IMR-90 (cell line): ENCODE measurements at regions of chr2 and their contacts with region 1.

Region 1: GRCh38 chr2:70070541-70071268 is 16.6 kb upstream of the PCBP1 start:
- DNase-seq: peak; percentile 90
- ATAC-seq: peak; percentile 98
- H3K4me3 ChIP-seq: no peak overlapping the region
- H3K27ac ChIP-seq: peak overlapping the region; percentile 83; the same call in 1 of the 2 replicates
- H3K4me1 ChIP-seq: peaks cover 6% of the 10 kb centered on the region
- H3K27me3 ChIP-seq: no peaks in the 10 kb centered on the region
- CTCF ChIP-seq: peak; percentile 90
- POLR2A ChIP-seq: no peak
- RAD21 ChIP-seq: peak; percentile 91

Region 2: GRCh38 chr2:70124983-70125480 is 54.3 kb after region 1 on chr2:
- CTCF ChIA-PET with region 1: no interaction called
- POLR2A ChIA-PET with region 1: no interaction called
- dilution Hi-C with region 1: no loop called
- in situ Hi-C with region 1: no loop called
- intact Hi-C with region 1: no loop called
- DNase-seq: peak; percentile 31
- ATAC-seq: peak; percentile 34
- H3K4me3 ChIP-seq: peak overlapping the region; percentile 20
- H3K27ac ChIP-seq: peak overlapping the region; percentile 54
- H3K4me1 ChIP-seq: peaks cover 17% of the 10 kb centered on the region
- H3K27me3 ChIP-seq: no peaks in the 10 kb centered on the region
- CTCF ChIP-seq: no peak
- POLR2A ChIP-seq: no peak
- RAD21 ChIP-seq: no peak

Region 3: GRCh38 chr2:70142590-70143313 is 72.0 kb after region 1 on chr2:
- CTCF ChIA-PET with region 1: interaction called, 3 read pairs
- POLR2A ChIA-PET with region 1: interaction called, 3 read pairs
- dilution Hi-C with region 1: no loop called
- in situ Hi-C with region 1: no loop called
- intact Hi-C with region 1: loop called (anchors 1 kb)
- DNase-seq: peak; percentile 99
- ATAC-seq: peak; percentile 88
- H3K4me3 ChIP-seq: peak overlapping the region; percentile 21; the same call in 1 of the 2 replicates
- H3K27ac ChIP-seq: peak overlapping the region; percentile 77
- H3K4me1 ChIP-seq: peaks cover 12% of the 10 kb centered on the region
- H3K27me3 ChIP-seq: no peaks in the 10 kb centered on the region
- CTCF ChIP-seq: peak; percentile 99
- POLR2A ChIP-seq: peak; percentile 94
- RAD21 ChIP-seq: peak; percentile 99